Activated B cell treated with CpG ODN at 0.5 μM for 24 hours (primary cell): ENCODE measurements at regions of chr9 and their contacts with region 1.

Region 1: GRCh38 chr9:68895741-68896478 is 118.0 kb downstream of the PRKACG start:
- DNase-seq: no peak
- ATAC-seq: peak; percentile 89
- H3K4me3 Mint-ChIP-seq: peak overlapping the region; percentile 60
- H3K27ac Mint-ChIP-seq: peak overlapping the region; percentile 84
- H3K4me1 Mint-ChIP-seq: peaks cover 58% of the 10 kb centered on the region
- H3K27me3 Mint-ChIP-seq: no peaks in the 10 kb centered on the region
- CTCF ChIP-seq: no peak

Region 2: DNA sequence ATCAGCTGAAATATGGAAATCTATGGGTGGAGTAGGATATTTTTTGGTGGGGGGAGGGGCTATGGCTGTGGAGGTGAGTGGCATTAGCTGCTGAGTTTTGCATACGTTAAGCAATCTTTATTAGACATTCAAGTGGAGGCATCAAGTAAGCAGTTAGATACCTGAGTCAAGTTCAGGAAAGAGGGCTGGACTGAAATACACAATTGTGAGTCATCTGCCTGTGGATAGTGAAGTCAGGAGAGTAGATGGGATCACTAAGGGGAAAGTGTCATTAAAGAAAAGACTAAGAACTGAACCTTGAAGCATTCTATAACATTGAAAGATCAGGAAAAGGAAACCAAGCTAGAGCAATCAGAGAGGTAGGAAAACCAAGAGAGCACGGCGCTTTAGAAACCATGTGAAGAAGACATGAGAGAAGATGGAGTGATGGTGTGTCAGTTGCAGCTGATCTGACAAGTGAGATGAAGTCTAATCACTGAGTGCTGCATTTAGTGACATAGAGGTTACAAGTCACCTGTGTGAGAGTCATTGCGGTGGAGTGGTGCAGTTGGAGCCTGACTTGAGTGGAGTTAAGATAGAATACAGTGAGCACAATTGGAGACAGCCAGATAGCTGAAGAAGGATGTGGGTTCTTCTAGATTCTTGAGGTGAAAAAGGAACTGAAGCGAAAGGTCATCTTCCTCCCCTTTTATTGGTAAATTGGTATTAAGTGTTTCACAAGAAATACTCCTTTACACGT is 102.1 kb before region 1 on chr9:
- CTCF ChIA-PET with region 1: no interaction called
- POLR2A ChIA-PET with region 1: no interaction called
- intact Hi-C with region 1: loop called (anchors 10 kb)
- DNase-seq: no peak
- ATAC-seq: peak; percentile 84
- H3K4me3 Mint-ChIP-seq: no peak overlapping the region
- H3K27ac Mint-ChIP-seq: no peak overlapping the region
- H3K4me1 Mint-ChIP-seq: peaks cover 25% of the 10 kb centered on the region
- H3K27me3 Mint-ChIP-seq: no peaks in the 10 kb centered on the region
- CTCF ChIP-seq: no peak

Region 3: GRCh38 chr9:68883224-68883623 is 12.7 kb before region 1 on chr9:
- CTCF ChIA-PET with region 1: no interaction called
- POLR2A ChIA-PET with region 1: no interaction called
- intact Hi-C with region 1: no loop called
- DNase-seq: no peak
- ATAC-seq: no peak
- H3K4me3 Mint-ChIP-seq: no peak overlapping the region
- H3K27ac Mint-ChIP-seq: no peak overlapping the region
- H3K4me1 Mint-ChIP-seq: peaks cover 7% of the 10 kb centered on the region
- H3K27me3 Mint-ChIP-seq: no peaks in the 10 kb centered on the region
- CTCF ChIP-seq: no peak

Region 4: GRCh38 chr9:68919661-68920060 is 23.8 kb after region 1 on chr9:
- CTCF ChIA-PET with region 1: no interaction called
- POLR2A ChIA-PET with region 1: no interaction called
- intact Hi-C with region 1: loop called (anchors 2 kb)
- DNase-seq: no peak
- ATAC-seq: peak; percentile 77
- H3K4me3 Mint-ChIP-seq: peak overlapping the region; percentile 32
- H3K27ac Mint-ChIP-seq: peak overlapping the region; percentile 63
- H3K4me1 Mint-ChIP-seq: peaks cover 29% of the 10 kb centered on the region
- H3K27me3 Mint-ChIP-seq: no peaks in the 10 kb centered on the region
- CTCF ChIP-seq: no peak

Region 5: DNA sequence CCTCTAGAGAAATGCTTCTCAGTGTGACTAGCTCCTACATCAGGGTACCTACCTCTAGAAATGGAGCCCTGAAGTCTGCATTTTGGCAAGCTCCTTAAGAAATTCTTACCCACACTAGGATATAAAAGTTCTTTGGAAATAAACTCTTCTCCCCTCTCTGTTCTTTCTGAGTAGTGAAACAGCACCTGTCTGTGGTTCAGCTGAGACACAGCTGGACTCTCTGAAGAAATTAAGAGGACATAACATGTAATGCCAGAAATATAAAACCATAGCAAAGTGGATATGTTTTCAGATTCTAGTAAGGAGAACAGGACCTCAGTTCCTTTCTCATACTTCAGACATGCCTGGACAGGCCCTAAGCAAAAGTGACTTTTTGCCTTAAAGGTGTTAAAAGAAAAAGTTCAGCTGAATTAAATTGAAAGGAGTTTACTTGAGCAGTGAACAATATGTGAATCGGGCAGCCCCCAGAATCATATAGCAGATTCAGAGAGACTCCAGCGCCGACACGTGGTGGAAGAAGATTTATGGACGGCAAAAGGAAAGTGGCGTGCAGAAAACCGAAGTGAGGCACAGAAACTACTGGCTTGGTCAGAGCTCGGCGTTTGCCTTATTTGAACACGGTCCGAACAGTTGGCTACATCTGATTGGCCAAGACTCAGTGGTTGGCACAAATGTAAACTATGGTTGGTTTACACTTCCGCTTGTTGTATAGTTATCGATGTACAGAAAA is 53.5 kb after region 1 on chr9:
- CTCF ChIA-PET with region 1: no interaction called
- POLR2A ChIA-PET with region 1: no interaction called
- intact Hi-C with region 1: loop called (anchors 10 kb)
- DNase-seq: no peak
- ATAC-seq: no peak
- H3K4me3 Mint-ChIP-seq: no peak overlapping the region
- H3K27ac Mint-ChIP-seq: peak overlapping the region; percentile 4
- H3K4me1 Mint-ChIP-seq: peaks cover 28% of the 10 kb centered on the region
- H3K27me3 Mint-ChIP-seq: no peaks in the 10 kb centered on the region
- CTCF ChIP-seq: no peak

Region 6: DNA sequence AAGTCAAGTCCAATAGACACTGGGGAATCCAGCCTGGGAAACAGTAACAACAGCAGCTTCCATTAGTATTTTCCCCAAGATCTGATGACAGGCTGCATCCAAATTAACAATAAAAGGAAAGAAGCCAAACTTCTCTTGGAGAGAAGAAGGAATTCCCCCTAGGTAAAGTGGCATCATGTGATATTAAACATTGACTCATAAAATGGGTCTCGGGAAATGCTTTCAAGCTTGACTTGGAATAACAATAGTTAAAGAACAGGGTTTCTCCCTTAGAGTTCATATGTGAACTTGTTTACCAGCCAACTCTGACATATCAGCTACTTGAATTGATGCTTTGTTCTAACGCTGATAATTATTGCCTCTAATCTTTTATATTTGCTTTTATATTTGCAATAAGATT is 474.5 kb after region 1 on chr9:
- CTCF ChIA-PET with region 1: no interaction called
- POLR2A ChIA-PET with region 1: no interaction called
- intact Hi-C with region 1: no loop called
- DNase-seq: no peak
- ATAC-seq: no peak
- H3K4me3 Mint-ChIP-seq: no peak overlapping the region
- H3K27ac Mint-ChIP-seq: no peak overlapping the region
- H3K4me1 Mint-ChIP-seq: no peaks in the 10 kb centered on the region
- H3K27me3 Mint-ChIP-seq: peaks cover 13% of the 10 kb centered on the region
- CTCF ChIP-seq: no peak